ENCODE measurements at regions of chr19 and their contacts with region 1.

Region 1: GRCh38 chr19:2537584-2538433 is 61.9 kb downstream of the GADD45B start:
- DNase-seq: no peak
- H3K4me3 ChIP-seq: no peak overlapping the region
- H3K27ac ChIP-seq: no peak overlapping the region
- H3K4me1 ChIP-seq: peaks cover 27% of the 10 kb centered on the region
- H3K27me3 ChIP-seq: no peaks in the 10 kb centered on the region
- CTCF ChIP-seq: no peak
- POLR2A ChIP-seq: no peak

Region 2: DNA sequence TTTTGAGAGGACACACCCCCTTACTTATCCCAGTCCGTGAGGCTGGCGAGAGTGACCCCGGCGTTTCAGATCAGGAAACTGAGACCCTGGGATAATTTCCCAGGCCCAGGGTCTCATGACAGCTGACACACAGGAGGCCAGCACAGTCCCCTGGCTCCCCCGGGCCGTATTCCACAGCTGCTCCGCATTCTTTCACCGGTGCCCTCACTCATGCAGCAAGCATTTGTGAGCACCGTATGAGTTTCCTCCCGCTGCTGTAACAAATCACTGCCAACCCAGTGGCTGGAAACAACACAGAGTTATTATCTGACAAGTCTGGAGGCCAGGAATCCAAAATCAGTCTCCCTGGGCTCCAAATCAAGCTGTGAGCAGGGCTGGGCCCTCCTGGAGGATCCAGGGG is 40.6 kb before region 1 on chr19:
- intact Hi-C with region 1: loop called (anchors 1 kb)
- DNase-seq: no peak
- H3K4me3 ChIP-seq: no peak overlapping the region
- H3K27ac ChIP-seq: no peak overlapping the region
- H3K4me1 ChIP-seq: peaks cover 32% of the 10 kb centered on the region
- H3K27me3 ChIP-seq: no peaks in the 10 kb centered on the region
- CTCF ChIP-seq: no peak
- POLR2A ChIP-seq: no peak

Region 3: DNA sequence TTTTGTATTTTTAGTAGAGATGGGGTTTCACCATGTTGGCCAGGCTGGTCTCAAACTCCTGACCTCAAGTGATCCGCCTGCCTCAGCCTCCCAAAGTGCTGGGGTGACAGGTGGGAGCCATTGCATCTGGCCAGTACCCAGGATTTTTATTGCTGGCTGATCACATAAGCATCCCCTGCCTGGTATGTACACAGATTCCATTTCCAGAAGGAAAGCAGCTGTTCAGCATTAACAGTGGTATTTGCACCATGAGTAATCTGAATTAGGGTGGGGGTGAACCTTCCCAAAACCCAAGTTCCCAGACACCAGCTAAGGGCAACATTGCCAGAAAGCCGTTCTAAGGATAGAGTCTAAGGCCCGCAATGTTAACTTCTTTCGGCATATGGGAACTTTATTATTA is 310.8 kb after region 1 on chr19:
- intact Hi-C with region 1: no loop called
- DNase-seq: no peak
- H3K4me3 ChIP-seq: no peak overlapping the region
- H3K27ac ChIP-seq: no peak overlapping the region
- H3K4me1 ChIP-seq: no peaks in the 10 kb centered on the region
- H3K27me3 ChIP-seq: no peaks in the 10 kb centered on the region
- CTCF ChIP-seq: no peak
- POLR2A ChIP-seq: no peak

Measured in vagina (tissue), 2 donors.